HEK293 (cell line): ENCODE measurements at regions of chr15 and their contacts with region 1.

Region 1: GRCh38 chr15:75029378-75030022 is 6.1 kb downstream of the PPCDC start:
- H3K4me3 ChIP-seq: no peak overlapping the region
- H3K27ac ChIP-seq: no peak overlapping the region
- H3K4me1 ChIP-seq: peaks cover 5% of the 10 kb centered on the region; the same call in 1 of the 2 replicates
- CTCF ChIP-seq: peak; percentile 93

Region 2: GRCh38 chr15:74983725-74984231 is 45.7 kb before region 1 on chr15:
- CTCF ChIA-PET with region 1: no interaction called
- POLR2A ChIA-PET with region 1: no interaction called
- H3K4me3 ChIP-seq: no peak overlapping the region
- H3K27ac ChIP-seq: no peak overlapping the region
- H3K4me1 ChIP-seq: no peaks in the 10 kb centered on the region
- CTCF ChIP-seq: no peak

Region 3: GRCh38 chr15:75042730-75043508 is 13.4 kb after region 1 on chr15:
- CTCF ChIA-PET with region 1: interaction called, 20 read pairs
- POLR2A ChIA-PET with region 1: interaction called, 6 read pairs
- H3K4me3 ChIP-seq: no peak overlapping the region
- H3K27ac ChIP-seq: no peak overlapping the region; the same call in 1 of the 2 replicates
- H3K4me1 ChIP-seq: peaks cover 20% of the 10 kb centered on the region
- CTCF ChIP-seq: peak; percentile 63; the same call in 1 of the 2 replicates

Region 4: DNA sequence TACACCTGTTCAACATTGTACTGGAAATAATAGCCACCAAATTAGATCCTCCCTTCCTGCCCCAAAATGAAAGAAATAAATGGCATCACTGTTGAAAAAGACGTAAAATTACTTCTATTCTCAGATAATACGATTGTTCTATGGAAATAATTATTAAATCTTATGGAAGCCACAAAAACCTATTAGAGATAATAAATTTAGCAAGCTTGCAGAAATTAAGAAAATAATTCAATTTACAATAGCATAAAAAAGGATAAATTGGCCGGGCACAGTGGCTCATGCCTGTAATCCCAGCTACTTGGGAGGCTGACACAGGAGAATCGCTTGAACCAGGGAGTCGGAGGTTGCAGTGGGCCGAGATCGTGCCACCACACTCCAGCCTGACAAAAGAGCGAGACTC is 51.6 kb after region 1 on chr15:
- CTCF ChIA-PET with region 1: no interaction called
- POLR2A ChIA-PET with region 1: no interaction called
- H3K4me3 ChIP-seq: no peak overlapping the region
- H3K27ac ChIP-seq: no peak overlapping the region
- H3K4me1 ChIP-seq: no peaks in the 10 kb centered on the region
- CTCF ChIP-seq: no peak

Region 5: DNA sequence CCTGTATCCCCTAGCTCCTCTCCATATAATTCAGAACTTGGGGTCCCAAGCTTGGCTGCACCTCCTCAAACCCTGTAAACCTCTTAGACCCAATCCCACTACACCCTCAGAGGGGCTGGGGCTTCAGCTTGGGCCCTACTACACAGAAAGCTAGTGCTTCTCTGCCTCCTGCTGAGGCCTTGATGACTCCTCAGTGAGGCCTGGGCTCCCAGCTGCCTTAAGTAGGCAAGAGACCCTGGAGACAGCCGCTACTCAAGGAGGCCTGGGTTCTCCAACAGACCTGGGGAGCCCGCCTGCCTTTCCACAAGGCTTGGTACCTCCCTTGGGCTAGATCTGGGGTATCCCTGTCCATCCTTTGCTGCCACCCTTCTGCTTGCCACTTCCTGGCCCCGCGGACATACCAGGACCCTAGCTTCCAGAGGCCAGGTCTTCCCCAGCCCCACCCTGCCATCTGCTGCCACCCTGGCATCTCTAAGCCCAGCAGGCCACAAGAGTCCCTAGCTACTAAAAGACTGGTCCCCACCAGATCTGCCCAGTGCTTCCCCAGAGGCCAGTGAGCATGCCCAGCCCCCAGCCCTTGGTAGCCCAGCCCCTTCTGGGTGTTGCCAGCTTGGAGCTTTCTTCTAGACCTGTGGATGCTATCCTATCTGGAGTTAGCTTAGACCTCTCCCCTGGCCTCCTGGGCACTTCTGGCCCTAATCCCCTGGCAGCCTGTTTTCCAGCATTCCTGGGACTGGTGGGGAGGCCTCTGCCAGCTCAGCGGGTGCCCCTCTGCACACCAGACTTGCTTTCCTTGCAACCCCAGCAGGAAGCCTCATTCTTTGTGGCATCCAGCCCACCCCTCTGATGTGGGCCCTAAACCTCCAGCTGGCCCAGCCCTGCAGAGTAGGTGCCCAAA is 185.9 kb after region 1 on chr15:
- CTCF ChIA-PET with region 1: interaction called, 27 read pairs
- POLR2A ChIA-PET with region 1: interaction called, 11 read pairs
- H3K4me3 ChIP-seq: no peak overlapping the region
- H3K27ac ChIP-seq: no peak overlapping the region
- H3K4me1 ChIP-seq: no peaks in the 10 kb centered on the region
- CTCF ChIP-seq: no peak

Region 6: GRCh38 chr15:75302318-75302717 is 272.8 kb after region 1 on chr15:
- CTCF ChIA-PET with region 1: interaction called, 25 read pairs
- POLR2A ChIA-PET with region 1: no interaction called
- H3K4me3 ChIP-seq: no peak overlapping the region
- H3K27ac ChIP-seq: no peak overlapping the region
- H3K4me1 ChIP-seq: no peaks in the 10 kb centered on the region
- CTCF ChIP-seq: no peak

Region 7: GRCh38 chr15:75307778-75308391 is 278.4 kb after region 1 on chr15:
- CTCF ChIA-PET with region 1: interaction called, 25 read pairs
- POLR2A ChIA-PET with region 1: no interaction called
- H3K4me3 ChIP-seq: no peak overlapping the region
- H3K27ac ChIP-seq: no peak overlapping the region
- H3K4me1 ChIP-seq: no peaks in the 10 kb centered on the region
- CTCF ChIP-seq: peak; percentile 89

Region 8: GRCh38 chr15:75616764-75617163 is 587.3 kb after region 1 on chr15:
- CTCF ChIA-PET with region 1: no interaction called
- POLR2A ChIA-PET with region 1: no interaction called
- H3K4me3 ChIP-seq: no peak overlapping the region
- H3K27ac ChIP-seq: no peak overlapping the region
- H3K4me1 ChIP-seq: no peaks in the 10 kb centered on the region
- CTCF ChIP-seq: no peak